Right ventricle myocardium inferior (tissue), 1 donor: ENCODE measurements at regions of chr17 and their contacts with region 1.

Region 1: GRCh38 chr17:77542551-77543490 is 402.1 kb downstream of the SEC14L1 start:
- DNase-seq: peak; percentile 86
- ATAC-seq: peak; percentile 95

Region 2: DNA sequence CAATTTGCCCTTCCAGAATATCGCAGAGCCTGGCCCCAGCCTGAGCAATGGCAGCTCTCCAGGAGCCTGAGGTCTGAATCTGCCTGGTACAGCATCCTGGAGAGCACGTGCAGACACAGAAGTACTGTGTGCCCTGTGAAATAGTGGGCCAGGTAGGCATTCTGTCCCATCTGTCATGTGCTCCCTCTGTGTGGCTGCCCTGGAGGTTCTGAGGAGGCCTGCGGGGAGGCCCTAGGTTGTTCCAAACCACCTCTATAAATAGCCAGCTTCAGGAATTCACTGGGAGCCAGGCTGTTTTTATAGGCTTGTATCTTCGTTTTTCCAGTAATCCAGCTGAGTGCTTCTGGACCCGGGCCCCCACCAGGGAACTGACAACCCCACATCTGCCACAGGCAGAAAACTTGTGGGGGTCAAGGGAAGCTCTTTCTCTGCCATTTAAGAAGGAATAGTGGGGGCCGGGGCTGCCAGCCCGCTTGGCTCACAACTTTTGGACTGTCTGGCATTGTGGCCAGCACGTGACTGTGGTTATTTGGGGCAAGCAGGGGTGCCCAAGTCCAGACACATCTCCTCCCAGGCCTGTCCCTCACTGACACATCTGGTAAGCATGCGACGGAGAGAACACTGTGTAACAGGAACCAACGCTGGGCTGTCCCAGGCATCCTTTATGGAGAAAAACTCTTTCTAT is 59.4 kb after region 1 on chr17:
- intact Hi-C with region 1: loop called (anchors 2 kb)
- DNase-seq: peak; percentile 84
- ATAC-seq: peak; percentile 94

Region 3: DNA sequence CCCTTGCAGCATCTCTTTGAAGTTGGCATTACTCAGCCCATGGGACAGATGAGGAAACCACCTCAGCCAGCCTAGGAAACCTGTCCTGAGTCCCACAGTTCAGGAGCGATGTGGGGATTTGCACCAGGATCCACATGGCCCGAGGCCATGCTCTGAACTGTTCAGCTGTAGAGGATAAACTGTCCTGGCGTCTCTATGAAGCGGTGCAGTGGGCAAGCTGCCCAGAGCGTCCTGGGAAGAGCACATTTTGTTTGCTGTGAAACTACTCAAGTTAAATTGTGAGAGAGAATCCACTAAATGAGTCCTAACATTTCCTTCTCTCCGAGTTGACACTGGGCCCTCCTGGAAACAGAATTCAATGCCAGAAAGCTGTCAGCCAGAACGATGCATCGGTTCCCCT is 139.0 kb after region 1 on chr17:
- intact Hi-C with region 1: loop called (anchors 5 kb)
- DNase-seq: peak; percentile 90
- ATAC-seq: peak; percentile 79

Region 4: DNA sequence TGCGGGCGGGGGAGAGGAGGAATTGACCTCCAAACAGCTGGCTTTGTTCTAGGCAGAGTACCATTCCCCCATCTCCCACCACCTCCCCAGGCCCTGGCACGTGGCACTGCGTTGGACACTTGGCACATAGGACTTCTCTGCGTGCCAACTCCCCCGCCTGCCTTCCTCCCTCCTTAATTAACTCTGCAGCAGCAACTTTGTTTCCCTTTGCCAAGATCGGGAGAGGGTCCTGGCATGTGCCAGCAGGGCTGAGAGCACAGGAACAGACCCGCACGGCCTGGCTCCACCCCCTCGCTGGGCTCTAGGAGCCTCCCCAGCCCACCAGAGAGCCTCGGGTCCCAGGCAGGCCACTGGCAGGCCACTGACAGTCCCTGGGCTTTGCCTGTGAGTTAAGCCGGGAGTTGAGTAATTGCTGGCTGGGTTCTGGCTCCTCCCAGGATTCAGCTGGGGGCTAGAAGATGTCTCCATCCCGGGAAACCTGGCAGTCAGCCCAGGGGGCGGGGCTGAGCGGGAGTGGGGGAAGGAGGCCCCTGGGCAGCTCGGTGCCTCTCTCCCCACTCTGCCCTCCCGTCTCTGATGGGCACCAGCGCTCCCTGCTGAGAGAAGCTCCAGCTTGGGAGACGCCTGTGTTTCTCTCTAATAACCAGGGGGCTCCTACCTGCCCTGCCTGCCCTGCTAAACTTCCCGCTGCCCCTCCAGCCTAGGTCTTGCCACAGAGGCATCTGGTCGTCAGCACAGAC is 191.7 kb after region 1 on chr17:
- intact Hi-C with region 1: loop called (anchors 2 kb)
- DNase-seq: peak; percentile 93
- ATAC-seq: peak; percentile 78

Region 5: GRCh38 chr17:77821097-77821496 is 278.3 kb after region 1 on chr17:
- intact Hi-C with region 1: loop called (anchors 5 kb)
- DNase-seq: no peak
- ATAC-seq: peak; percentile 56

Region 6: GRCh38 chr17:78013683-78014467 is 471.1 kb after region 1 on chr17:
- intact Hi-C with region 1: loop called (anchors 1 kb)
- DNase-seq: no peak
- ATAC-seq: peak; percentile 74